Thyroid gland (tissue), 4 donors: ENCODE measurements at regions of chr17 and their contacts with region 1.

Region 1: GRCh38 chr17:42405963-42406495 is 17.0 kb downstream of the CAVIN1 start:
- DNase-seq: peak; percentile 85 to 88
- H3K4me3 ChIP-seq: no peak overlapping the region
- H3K27ac ChIP-seq: peak overlapping the region in 2 of 3 donors; percentile 53 to 90
- H3K4me1 ChIP-seq: peaks cover 31 to 49% of the 10 kb centered on the region in 2 donors
- H3K27me3 ChIP-seq: no peaks in the 10 kb centered on the region
- CTCF ChIP-seq: peak; percentile 72 to 98 (median 90)
- POLR2A ChIP-seq: no peak

Region 2: DNA sequence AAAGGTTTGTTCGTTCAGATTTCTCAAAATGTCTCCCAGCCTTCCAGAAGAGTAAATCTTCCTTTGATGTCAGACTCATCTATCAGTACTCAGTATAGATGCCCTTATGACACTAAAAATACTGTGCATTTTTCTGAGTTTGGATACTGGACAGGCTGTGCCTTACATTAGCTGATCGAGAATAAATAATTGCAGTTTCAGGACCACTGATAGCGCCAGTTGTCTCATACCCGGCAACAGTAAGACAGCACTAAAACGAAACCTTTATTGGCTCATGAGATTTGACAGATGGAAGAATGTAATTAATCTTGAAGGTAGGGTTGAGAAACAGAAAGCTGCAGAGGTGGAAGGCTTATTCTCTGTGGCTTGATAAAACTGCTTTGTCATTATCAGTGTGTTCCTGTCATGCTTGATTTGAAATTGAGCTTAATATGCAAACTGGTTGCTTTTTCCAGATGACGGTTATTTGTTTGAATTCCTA is 53.8 kb after region 1 on chr17:
- intact Hi-C with region 1: loop called (anchors 10 kb)
- DNase-seq: no peak
- H3K4me3 ChIP-seq: peak overlapping the region in 2 of 3 donors; percentile 59 to 76
- H3K27ac ChIP-seq: peak overlapping the region; percentile 89 to 93 (median 92)
- H3K4me1 ChIP-seq: peaks cover 25 to 33% of the 10 kb centered on the region in 2 donors
- H3K27me3 ChIP-seq: no peaks in the 10 kb centered on the region
- CTCF ChIP-seq: no peak
- POLR2A ChIP-seq: peak in 1 of 2 donors; percentile 24